A549 (cell line): ENCODE measurements at regions of chr17 and their contacts with region 1.

Region 1: GRCh38 chr17:5065227-5065744 is 13.0 kb upstream of the ZFP3 start:
- DNase-seq: no peak
- ATAC-seq: no peak
- H3K4me3 ChIP-seq: no peak overlapping the region
- H3K27ac ChIP-seq: no peak overlapping the region
- H3K4me1 ChIP-seq: no peaks in the 10 kb centered on the region
- CTCF ChIP-seq: no peak
- EP300 ChIP-seq: no peak
- POLR2A ChIP-seq: no peak
- RAD21 ChIP-seq: no peak

Region 2: GRCh38 chr17:4903051-4903818 is 162.1 kb before region 1 on chr17 and contains the start of gene CHRNE:
- CTCF ChIA-PET with region 1: interaction called, 42 read pairs
- POLR2A ChIA-PET with region 1: no interaction called
- DNase-seq: peak; percentile 58 to 89
- ATAC-seq: peak; percentile 74 to 85
- H3K4me3 ChIP-seq: no peak within 1 kb of the TSS
- H3K27ac ChIP-seq: no peak within 1 kb of the TSS
- H3K4me1 ChIP-seq: 0 out of 3 replicates have a peak, but pooled peaks cover 5% of the 10 kb centered on the region
- CTCF ChIP-seq: peak; percentile 90
- EP300 ChIP-seq: no peak
- POLR2A ChIP-seq: no peak
- RAD21 ChIP-seq: peak; percentile 62 to 73
- polyA plus RNA-seq, gene CHRNE: 0.07 and 0.10 TPM in 2 replicates

Region 3: GRCh38 chr17:4920351-4921048 is 144.8 kb before region 1 on chr17:
- CTCF ChIA-PET with region 1: interaction called, 15 read pairs
- POLR2A ChIA-PET with region 1: no interaction called
- DNase-seq: no peak
- ATAC-seq: peak; percentile 40 to 54; a peak in 4 of 6 replicates
- H3K4me3 ChIP-seq: no peak overlapping the region
- H3K27ac ChIP-seq: no peak overlapping the region
- H3K4me1 ChIP-seq: 0 out of 3 replicates have a peak, but pooled peaks cover 4% of the 10 kb centered on the region
- CTCF ChIP-seq: no peak
- EP300 ChIP-seq: no peak
- POLR2A ChIP-seq: no peak
- RAD21 ChIP-seq: no peak

Region 4: GRCh38 chr17:4997302-4998026 is 67.8 kb before region 1 on chr17 and contains the starts of genes INCA1 and KIF1C:
- CTCF ChIA-PET with region 1: interaction called, 11 read pairs
- POLR2A ChIA-PET with region 1: interaction called, 3 read pairs
- DNase-seq: peak; percentile 91 to 98
- ATAC-seq: peak; percentile 86 to 93
- H3K4me3 ChIP-seq: peak within 1 kb of the TSS; percentile 95
- H3K27ac ChIP-seq: peak within 1 kb of the TSS; percentile 87 to 91
- H3K4me1 ChIP-seq: peaks cover 26% of the 10 kb centered on the region
- CTCF ChIP-seq: no peak
- EP300 ChIP-seq: no peak
- POLR2A ChIP-seq: peak; percentile 82
- RAD21 ChIP-seq: no peak
- polyA plus RNA-seq, gene INCA1: 0.66 and 0.86 TPM in 2 replicates
- polyA plus RNA-seq, gene KIF1C: 42.0 and 48.4 TPM in 2 replicates

Region 5: GRCh38 chr17:5023588-5024147 is 41.6 kb before region 1 on chr17:
- CTCF ChIA-PET with region 1: interaction called, 58 read pairs
- POLR2A ChIA-PET with region 1: no interaction called
- DNase-seq: no peak
- ATAC-seq: no peak
- H3K4me3 ChIP-seq: no peak overlapping the region
- H3K27ac ChIP-seq: no peak overlapping the region
- H3K4me1 ChIP-seq: no peaks in the 10 kb centered on the region
- CTCF ChIP-seq: no peak
- EP300 ChIP-seq: no peak
- POLR2A ChIP-seq: no peak
- RAD21 ChIP-seq: no peak

Region 6: GRCh38 chr17:5049314-5049895 is 15.9 kb before region 1 on chr17:
- CTCF ChIA-PET with region 1: interaction called, 63 read pairs
- POLR2A ChIA-PET with region 1: no interaction called
- DNase-seq: no peak
- ATAC-seq: no peak
- H3K4me3 ChIP-seq: no peak overlapping the region
- H3K27ac ChIP-seq: no peak overlapping the region
- H3K4me1 ChIP-seq: no peaks in the 10 kb centered on the region
- CTCF ChIP-seq: no peak
- EP300 ChIP-seq: no peak
- POLR2A ChIP-seq: no peak
- RAD21 ChIP-seq: no peak

Region 7: GRCh38 chr17:5131146-5131715 is 65.9 kb after region 1 on chr17:
- CTCF ChIA-PET with region 1: no interaction called
- POLR2A ChIA-PET with region 1: no interaction called
- DNase-seq: no peak
- ATAC-seq: no peak
- H3K4me3 ChIP-seq: no peak overlapping the region
- H3K27ac ChIP-seq: no peak overlapping the region
- H3K4me1 ChIP-seq: no peaks in the 10 kb centered on the region
- CTCF ChIP-seq: no peak
- EP300 ChIP-seq: no peak
- POLR2A ChIP-seq: no peak
- RAD21 ChIP-seq: no peak